Heart left ventricle (tissue), 16 donors: ENCODE measurements at regions of chr9 and their contacts with region 1.

Region 1: DNA sequence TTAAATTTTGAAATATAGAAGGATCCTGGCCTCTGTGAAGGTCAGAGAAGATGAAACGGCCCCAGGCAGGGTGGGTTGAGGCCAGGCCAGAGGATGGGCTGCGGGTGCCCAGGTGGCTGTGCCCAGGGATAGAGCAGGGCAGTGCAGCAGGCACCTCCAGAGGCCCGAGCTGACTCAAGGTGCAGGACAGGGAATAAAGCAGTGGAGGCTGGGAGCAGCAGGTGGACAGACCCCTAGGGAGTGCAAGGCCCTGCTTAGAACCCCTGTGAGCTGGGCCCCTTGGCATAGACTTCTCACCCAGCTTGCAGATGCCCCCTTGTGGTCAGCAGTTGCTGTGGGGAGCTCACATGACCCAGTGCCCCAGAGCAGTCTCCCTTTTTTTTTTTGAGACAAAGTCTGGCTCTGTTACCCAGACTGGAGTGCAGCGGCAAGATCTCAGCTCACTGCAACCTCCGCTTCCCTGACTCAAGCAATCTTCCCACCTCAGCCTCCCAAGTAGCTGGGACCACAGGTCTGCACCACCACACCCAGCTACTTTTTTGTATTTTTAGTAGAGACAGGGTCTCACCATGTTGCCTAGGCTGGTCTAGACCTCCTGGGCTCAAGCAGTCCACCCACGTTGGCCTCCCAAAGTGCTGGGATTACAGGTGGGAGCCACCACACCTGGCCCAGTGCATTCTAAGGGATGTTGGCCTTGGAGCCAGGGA is 118.8 kb downstream of the WNK2 start:
- DNase-seq: peak in 2 of 5 donors; percentile 69 to 71
- ATAC-seq: peak in 3 of 4 donors; percentile 8 to 36 (median 32)
- H3K4me3 ChIP-seq: no peak overlapping the region
- H3K27ac ChIP-seq: no peak overlapping the region
- H3K4me1 ChIP-seq: peaks cover 0 to 47% (median 14%) of the 10 kb centered on the region in 12 donors
- H3K27me3 ChIP-seq: no peaks in the 10 kb centered on the region
- CTCF ChIP-seq: peak; percentile 35 to 62 (median 48)
- POLR2A ChIP-seq: no peak

Region 2: DNA sequence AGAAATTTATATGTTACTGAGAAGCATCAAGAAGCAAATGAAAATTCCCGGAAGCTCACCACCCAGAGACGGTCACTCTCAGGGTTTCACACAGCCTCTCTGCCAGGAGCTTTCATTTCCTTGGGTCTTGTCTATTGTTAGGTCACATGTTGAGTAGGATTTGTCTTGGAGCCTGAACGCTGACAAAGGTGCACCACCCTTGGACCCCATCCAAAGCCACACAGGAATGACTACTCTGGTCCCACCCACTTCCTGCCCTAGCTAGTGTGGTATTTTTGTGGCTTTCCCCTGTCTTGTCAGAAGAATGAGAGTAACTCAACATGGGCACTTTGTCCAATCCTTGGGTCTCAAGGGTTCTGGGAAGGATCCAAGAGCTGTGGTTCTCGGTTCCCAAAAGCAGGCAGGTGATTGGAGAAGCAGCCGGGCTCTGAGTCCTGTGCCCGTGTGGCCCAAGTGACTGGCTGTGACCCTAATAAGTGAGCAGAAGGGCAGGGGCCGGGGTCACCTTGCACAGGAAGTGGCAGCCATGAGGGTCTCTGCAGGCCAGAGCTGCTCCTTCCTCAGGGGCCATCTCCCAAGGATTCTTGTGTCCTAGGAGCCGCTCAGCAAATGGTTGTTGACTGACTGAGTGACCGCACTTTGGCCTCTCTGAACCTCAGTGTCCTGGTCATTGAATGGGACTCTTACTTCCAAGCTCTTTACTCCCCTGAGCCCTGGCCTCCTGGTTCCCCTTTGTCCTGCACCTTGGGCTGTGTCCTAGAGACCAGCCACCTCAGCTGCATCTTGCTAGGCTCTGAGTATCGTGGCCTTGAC is 348.4 kb before region 1 on chr9:
- intact Hi-C with region 1: loop called in 1 of 10 experiments (anchors 10 kb)
- DNase-seq: peak in 4 of 5 donors; percentile 71 to 84 (median 75)
- ATAC-seq: peak; percentile 48 to 94 (median 76)
- H3K4me3 ChIP-seq: peak overlapping the region in 2 of 12 donors; percentile 6 to 35
- H3K27ac ChIP-seq: peak overlapping the region; percentile 44 to 80 (median 75)
- H3K4me1 ChIP-seq: peaks cover 0 to 28% (median 8%) of the 10 kb centered on the region in 12 donors
- H3K27me3 ChIP-seq: peaks cover 0 to 53% (median 8%) of the 10 kb centered on the region in 9 donors
- CTCF ChIP-seq: no peak
- POLR2A ChIP-seq: peak in 1 of 2 donors; percentile 41

Region 3: GRCh38 chr9:93159601-93160471 is 142.9 kb before region 1 on chr9:
- intact Hi-C with region 1: loop called (anchors 2 to 5 kb)
- DNase-seq: peak; percentile 78 to 91 (median 86)
- ATAC-seq: peak; percentile 80 to 92 (median 90)
- H3K4me3 ChIP-seq: no peak overlapping the region
- H3K27ac ChIP-seq: no peak overlapping the region
- H3K4me1 ChIP-seq: peaks cover 0 to 29% (median 12%) of the 10 kb centered on the region in 12 donors
- H3K27me3 ChIP-seq: no peaks in the 10 kb centered on the region
- CTCF ChIP-seq: peak; percentile 85 to 98 (median 95)
- POLR2A ChIP-seq: no peak

Region 4: GRCh38 chr9:93223260-93224180 is 79.2 kb before region 1 on chr9:
- intact Hi-C with region 1: no loop called
- DNase-seq: peak; percentile 21 to 72 (median 56)
- ATAC-seq: peak; percentile 70 to 77 (median 74)
- H3K4me3 ChIP-seq: no peak overlapping the region
- H3K27ac ChIP-seq: peak overlapping the region in 9 of 12 donors; percentile 9 to 68 (median 53)
- H3K4me1 ChIP-seq: peaks cover 0 to 88% (median 33%) of the 10 kb centered on the region in 12 donors
- H3K27me3 ChIP-seq: peaks cover 0 to 3% (median 0%) of the 10 kb centered on the region in 9 donors
- CTCF ChIP-seq: no peak
- POLR2A ChIP-seq: no peak